ENCODE measurements at regions of chr1 and their contacts with region 1.

Region 1: DNA sequence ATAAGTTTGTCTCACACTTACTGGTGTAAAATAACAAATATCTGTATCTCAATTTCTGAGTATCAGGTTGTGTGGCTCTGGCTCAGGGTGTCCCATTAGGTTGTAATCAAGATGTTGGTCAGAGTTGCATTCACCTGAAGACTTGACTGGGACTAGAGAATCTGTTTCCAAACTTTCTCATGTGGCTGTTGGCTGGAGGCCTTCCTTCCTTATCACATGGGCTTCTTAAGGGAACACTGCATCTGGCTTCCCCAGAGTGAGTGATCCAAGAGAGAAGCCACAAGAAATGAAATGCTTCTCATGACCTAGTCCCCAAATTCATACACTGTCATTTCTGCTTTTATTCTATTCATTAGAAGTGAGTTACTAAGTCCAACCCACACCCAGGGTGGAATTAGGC is 568.4 kb upstream of the CAMK1G start:
- DNase-seq: no peak
- ATAC-seq: no peak
- H3K4me3 ChIP-seq: no peak overlapping the region
- H3K4me3 Mint-ChIP-seq: no peak overlapping the region
- H3K27ac ChIP-seq: no peak overlapping the region
- H3K27ac Mint-ChIP-seq: no peak overlapping the region
- H3K4me1 ChIP-seq: no peaks in the 10 kb centered on the region
- H3K4me1 Mint-ChIP-seq: no peaks in the 10 kb centered on the region
- H3K27me3 ChIP-seq: no peaks in the 10 kb centered on the region
- H3K27me3 Mint-ChIP-seq: peaks cover 1 to 11% of the 10 kb centered on the region in 2 donors

Region 2: DNA sequence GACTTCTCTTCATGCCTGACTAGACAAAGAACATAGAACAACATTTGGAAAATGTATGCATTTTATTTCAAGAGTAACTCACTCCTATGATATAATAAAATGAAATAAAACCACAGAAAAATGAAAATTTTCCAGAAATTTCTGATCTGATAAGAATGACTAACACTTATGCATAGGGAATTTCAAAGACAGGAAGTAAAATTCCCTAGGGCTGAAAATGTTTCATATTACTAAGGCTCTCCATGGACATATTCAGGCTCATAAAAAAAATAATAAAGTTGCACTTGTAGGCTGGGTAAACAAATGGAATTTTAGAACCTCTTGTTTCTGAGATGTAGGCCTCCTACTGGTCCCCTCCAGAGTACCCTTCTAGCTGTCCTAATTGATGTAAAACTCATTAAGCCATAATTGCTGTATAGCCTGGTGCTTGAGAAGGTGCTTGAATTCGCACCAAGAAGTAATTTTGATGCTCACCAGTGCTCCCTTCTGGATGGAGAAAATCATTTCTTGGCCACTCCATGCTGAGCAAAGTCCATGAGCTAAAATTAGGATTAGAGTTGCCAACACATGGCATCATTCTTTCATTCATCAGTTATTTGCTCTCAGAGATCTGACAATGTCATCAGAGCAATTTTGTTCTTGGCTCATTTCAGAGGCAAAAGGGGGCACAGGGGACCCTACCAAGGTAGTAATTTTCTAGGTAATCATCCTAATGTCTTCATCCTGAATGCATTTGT is 72.5 kb before region 1 on chr1:
- CTCF ChIA-PET with region 1: no interaction called
- POLR2A ChIA-PET with region 1: interaction called in 1 of 2 experiments, 16 read pairs
- DNase-seq: no peak
- ATAC-seq: no peak
- H3K4me3 ChIP-seq: no peak overlapping the region
- H3K4me3 Mint-ChIP-seq: no peak overlapping the region
- H3K27ac ChIP-seq: no peak overlapping the region
- H3K27ac Mint-ChIP-seq: no peak overlapping the region
- H3K4me1 ChIP-seq: no peaks in the 10 kb centered on the region
- H3K4me1 Mint-ChIP-seq: no peaks in the 10 kb centered on the region
- H3K27me3 ChIP-seq: peaks cover 0 to 3% of the 10 kb centered on the region in 2 experiments
- H3K27me3 Mint-ChIP-seq: peaks cover 9 to 26% of the 10 kb centered on the region in 2 donors

Region 3: DNA sequence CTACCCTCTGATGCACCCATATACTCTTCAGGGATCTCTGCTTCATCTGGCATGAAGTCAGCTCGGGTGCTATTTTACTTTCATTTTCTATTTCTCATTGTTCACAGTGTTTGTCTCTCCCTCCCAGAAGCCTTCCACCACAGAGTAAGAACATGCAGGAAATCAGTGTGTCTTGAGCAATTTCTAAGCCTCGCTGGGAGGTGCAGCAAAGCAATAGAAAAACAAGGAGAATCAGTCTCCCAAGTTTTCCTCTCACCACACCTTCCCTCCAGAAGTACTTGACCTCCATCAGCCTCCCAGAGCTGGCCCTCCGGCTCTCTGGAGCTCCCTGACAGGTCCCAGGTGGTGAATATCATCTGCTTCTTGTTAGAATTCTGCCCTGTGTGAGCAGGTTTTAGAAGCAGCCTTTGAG is 26.3 kb before region 1 on chr1:
- CTCF ChIA-PET with region 1: no interaction called
- POLR2A ChIA-PET with region 1: no interaction called
- DNase-seq: peak in 7 of 35 experiments; percentile 0 to 37 (median 4)
- ATAC-seq: peak; percentile 72 to 87 (median 78)
- H3K4me3 ChIP-seq: peak overlapping the region; percentile 33 to 62
- H3K4me3 Mint-ChIP-seq: peak overlapping the region; percentile 68 to 83 (median 74)
- H3K27ac ChIP-seq: peak overlapping the region; percentile 58
- H3K27ac Mint-ChIP-seq: peak overlapping the region; percentile 82 to 90
- H3K4me1 ChIP-seq: peaks cover 3 to 4% of the 10 kb centered on the region in 2 experiments
- H3K4me1 Mint-ChIP-seq: peaks cover 20 to 22% (median 21%) of the 10 kb centered on the region in 3 donors
- H3K27me3 ChIP-seq: no peaks in the 10 kb centered on the region
- H3K27me3 Mint-ChIP-seq: peaks cover 4 to 5% of the 10 kb centered on the region in 2 donors

Region 4: GRCh38 chr1:209029737-209030136 is 14.6 kb after region 1 on chr1:
- CTCF ChIA-PET with region 1: no interaction called
- POLR2A ChIA-PET with region 1: no interaction called
- DNase-seq: no peak
- ATAC-seq: no peak
- H3K4me3 ChIP-seq: no peak overlapping the region
- H3K4me3 Mint-ChIP-seq: no peak overlapping the region
- H3K27ac ChIP-seq: no peak overlapping the region
- H3K27ac Mint-ChIP-seq: no peak overlapping the region
- H3K4me1 ChIP-seq: no peaks in the 10 kb centered on the region
- H3K4me1 Mint-ChIP-seq: no peaks in the 10 kb centered on the region
- H3K27me3 ChIP-seq: peaks cover 0 to 2% of the 10 kb centered on the region in 2 experiments
- H3K27me3 Mint-ChIP-seq: peaks cover 8 to 16% of the 10 kb centered on the region in 2 donors